ENCODE measurements at regions of chr2 and their contacts with region 1.

Region 1: DNA sequence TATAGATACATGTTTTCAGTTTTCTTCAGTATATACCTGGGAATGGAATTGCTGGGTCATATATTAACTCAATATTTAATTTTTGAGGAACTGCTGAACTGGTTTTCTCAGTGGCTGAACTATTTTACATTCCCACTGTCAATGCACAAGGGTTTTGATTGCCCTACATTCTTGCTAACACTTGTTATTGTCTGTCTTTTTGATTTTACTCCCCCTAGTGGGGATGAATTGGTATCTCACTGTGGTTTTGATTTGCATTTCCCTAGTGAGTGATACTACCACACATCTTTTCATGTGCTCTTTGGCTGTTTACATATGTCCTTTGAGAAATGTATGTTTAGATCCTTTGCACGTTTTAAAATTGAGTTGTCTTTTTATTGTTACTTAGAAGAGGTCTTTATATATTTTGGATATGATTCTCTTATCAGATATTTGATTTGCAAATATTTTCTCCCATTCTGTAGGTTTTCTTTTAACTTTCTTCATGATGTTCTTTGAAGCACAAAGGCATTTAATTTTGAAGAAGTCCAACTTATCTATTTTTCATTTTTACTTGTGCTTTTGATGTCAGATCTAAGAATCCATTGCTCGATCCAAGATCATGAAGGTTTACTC is 36.2 kb downstream of the ASB1 start:
- DNase-seq: no peak
- ATAC-seq: no peak
- H3K4me3 ChIP-seq: no peak overlapping the region
- H3K27ac ChIP-seq: no peak overlapping the region
- H3K4me1 ChIP-seq: peaks cover 10% of the 10 kb centered on the region
- H3K27me3 ChIP-seq: no peaks in the 10 kb centered on the region

Region 2: GRCh38 chr2:238362626-238363025 is 100.3 kb before region 1 on chr2:
- intact Hi-C with region 1: loop called in 2 of 4 experiments (anchors 2 to 5 kb)
- DNase-seq: peak in 2 of 3 donors; percentile 67 to 68
- ATAC-seq: peak; percentile 41 to 55
- H3K4me3 ChIP-seq: no peak overlapping the region
- H3K27ac ChIP-seq: no peak overlapping the region
- H3K4me1 ChIP-seq: no peaks in the 10 kb centered on the region
- H3K27me3 ChIP-seq: no peaks in the 10 kb centered on the region

Region 3: DNA sequence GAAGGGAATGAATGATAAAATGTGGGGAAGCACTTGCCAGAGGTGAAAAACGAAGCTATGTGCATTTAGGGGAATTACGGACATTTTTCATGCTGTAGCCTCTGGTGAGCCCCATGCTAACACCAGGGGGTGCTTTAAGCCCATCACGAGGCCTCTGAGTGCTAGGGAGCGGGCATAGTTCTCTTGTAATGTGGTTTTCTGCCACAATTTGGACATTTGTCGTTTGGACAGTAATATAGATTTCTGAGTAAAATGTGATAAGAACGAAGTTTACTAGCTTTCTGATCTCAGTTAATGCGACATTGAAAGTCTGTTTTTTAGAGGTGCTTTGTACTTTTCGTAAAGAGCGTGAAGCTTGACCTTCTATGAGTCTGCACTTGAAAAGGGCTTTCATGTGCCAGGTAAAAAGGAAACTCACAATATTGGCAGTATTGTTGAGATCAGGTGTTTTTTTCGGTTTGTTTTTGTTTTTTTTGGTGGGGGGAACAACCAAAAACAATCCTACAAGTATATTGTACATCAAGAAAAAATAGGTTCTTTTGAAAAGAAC is 92.0 kb before region 1 on chr2:
- intact Hi-C with region 1: loop called in 3 of 4 experiments (anchors 5 to 10 kb)
- DNase-seq: peak; percentile 53 to 85 (median 76)
- ATAC-seq: peak; percentile 91 to 92
- H3K4me3 ChIP-seq: no peak overlapping the region
- H3K27ac ChIP-seq: no peak overlapping the region
- H3K4me1 ChIP-seq: no peaks in the 10 kb centered on the region
- H3K27me3 ChIP-seq: no peaks in the 10 kb centered on the region

Measured in right cardiac atrium (tissue), 5 donors.